BJ (cell line): ENCODE measurements at regions of chr20 and their contacts with region 1.

Region 1: DNA sequence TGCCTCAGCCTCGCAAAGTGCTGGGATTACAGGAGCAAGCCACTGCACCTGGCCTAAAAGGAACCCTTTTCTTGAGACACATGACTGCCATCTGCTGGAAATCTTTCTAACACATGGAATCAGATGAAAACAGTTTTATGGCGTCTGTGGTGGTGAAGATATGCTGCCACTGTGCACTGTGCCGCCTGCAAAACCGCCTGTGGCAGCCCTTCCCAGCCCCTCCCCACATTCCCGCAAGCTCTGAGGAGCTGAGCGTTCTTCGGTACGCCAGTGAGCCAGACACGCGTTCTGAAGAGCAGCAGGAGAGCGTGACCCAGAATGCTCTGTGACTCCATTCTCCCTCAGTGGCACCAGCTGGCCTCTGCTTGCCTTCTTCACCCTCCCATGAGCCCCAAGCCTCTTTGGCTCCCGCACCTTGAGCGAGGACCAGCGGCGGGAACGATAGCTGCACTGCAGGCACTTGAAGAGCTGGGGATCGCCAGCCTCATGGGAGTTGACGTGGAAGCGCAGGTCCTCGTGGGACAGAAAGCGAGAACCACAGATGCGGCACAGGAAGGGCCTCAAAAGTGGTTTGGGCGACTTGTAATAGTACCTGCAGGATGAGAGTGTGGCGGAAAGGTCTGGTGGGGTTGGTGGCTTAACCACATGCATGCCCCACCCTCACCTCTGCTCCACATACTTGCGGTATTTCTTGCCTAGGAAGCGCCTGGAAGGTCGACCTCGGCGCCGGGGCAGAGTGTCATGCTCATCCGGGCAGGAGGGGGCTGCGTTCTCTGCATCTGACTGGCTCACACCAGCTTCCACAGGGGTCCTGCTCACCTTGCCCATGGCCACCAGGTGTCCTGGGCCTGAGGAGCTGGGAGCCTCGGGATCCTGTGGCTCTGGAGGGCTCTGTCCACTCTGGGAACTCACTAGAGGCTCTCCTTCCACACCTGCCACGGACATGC is 8.7 kb downstream of the ZNF335 start:
- DNase-seq: no peak
- H3K4me3 ChIP-seq: no peak overlapping the region
- H3K27me3 ChIP-seq: no peaks in the 10 kb centered on the region
- CTCF ChIP-seq: peak; percentile 36

Region 2: DNA sequence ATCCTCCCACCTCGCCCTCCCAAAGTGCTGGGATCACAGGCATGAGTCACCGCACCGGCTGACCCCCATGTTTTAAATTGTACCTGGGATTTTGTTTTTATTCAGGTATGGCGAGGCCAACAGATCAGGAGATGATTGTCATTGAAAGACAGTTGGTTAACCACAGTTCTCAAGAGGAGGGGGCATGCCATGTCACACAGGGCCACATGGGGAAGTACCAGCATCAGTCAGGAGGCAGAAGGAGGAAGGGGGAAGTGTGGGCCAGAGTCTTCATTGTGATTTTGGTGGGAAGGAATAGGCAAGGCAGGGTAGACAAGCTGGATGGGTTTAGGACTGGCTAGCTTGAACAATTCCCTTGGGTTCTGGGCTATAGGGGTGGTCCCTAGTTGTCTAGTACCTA is 35.4 kb after region 1 on chr20:
- CTCF ChIA-PET with region 1: no interaction called
- POLR2A ChIA-PET with region 1: interaction called, 19 read pairs
- DNase-seq: no peak
- H3K4me3 ChIP-seq: no peak overlapping the region
- H3K27me3 ChIP-seq: peaks cover 25% of the 10 kb centered on the region
- CTCF ChIP-seq: no peak